ENCODE measurements at regions of chr15 and their contacts with region 1.

Region 1: DNA sequence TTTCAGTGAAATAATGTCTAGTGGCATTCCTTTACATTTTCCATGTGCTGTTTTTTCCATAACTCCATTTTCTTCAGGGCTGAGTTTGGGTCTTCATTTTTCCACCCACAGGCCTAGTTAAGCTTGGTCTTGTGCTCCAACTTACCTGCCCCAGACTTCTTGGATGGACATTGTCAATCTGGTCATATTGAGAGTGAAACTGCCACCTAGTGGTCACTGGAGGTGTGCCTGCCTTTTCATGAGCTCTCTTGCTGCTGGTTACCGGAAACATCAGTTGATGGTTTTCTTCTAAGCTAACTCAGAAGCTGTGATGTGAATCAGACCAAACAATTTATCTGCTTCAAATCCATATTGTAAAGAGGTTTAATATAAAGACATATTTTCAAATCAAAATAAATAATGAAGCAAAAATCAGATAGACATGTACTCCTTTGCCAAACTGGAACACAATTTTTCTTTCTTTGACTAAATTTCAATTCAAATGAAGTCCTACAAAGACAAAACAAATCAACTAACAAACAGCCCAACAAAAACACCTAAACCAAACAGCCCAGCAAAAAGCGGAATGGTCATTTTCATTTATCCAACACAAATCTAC is 135.1 kb upstream of the RASGRP1 start:
- DNase-seq: peak; percentile 83
- H3K4me3 Mint-ChIP-seq: peak overlapping the region; percentile 93
- H3K27ac Mint-ChIP-seq: peak overlapping the region; percentile 97
- H3K4me1 Mint-ChIP-seq: peaks cover 80% of the 10 kb centered on the region
- H3K27me3 Mint-ChIP-seq: no peaks in the 10 kb centered on the region

Region 2: GRCh38 chr15:38453971-38454695 is 245.6 kb before region 1 on chr15 and contains the start of gene FAM98B:
- CTCF ChIA-PET with region 1: interaction called, 67 read pairs
- POLR2A ChIA-PET with region 1: interaction called, 32 read pairs
- DNase-seq: peak; percentile 89
- H3K4me3 Mint-ChIP-seq: peak within 1 kb of the TSS; percentile 93
- H3K27ac Mint-ChIP-seq: peak within 1 kb of the TSS; percentile 84
- H3K4me1 Mint-ChIP-seq: peaks cover 35% of the 10 kb centered on the region
- H3K27me3 Mint-ChIP-seq: peaks cover 14% of the 10 kb centered on the region
- total RNA-seq, gene FAM98B: 33.2 to 35.3 TPM

Region 3: GRCh38 chr15:38490242-38490922 is 209.3 kb before region 1 on chr15:
- CTCF ChIA-PET with region 1: interaction called, 12 read pairs
- POLR2A ChIA-PET with region 1: interaction called, 16 read pairs
- DNase-seq: no peak
- H3K4me3 Mint-ChIP-seq: no peak overlapping the region
- H3K27ac Mint-ChIP-seq: peak overlapping the region; percentile 17
- H3K4me1 Mint-ChIP-seq: peaks cover 57% of the 10 kb centered on the region
- H3K27me3 Mint-ChIP-seq: no peaks in the 10 kb centered on the region

Region 4: DNA sequence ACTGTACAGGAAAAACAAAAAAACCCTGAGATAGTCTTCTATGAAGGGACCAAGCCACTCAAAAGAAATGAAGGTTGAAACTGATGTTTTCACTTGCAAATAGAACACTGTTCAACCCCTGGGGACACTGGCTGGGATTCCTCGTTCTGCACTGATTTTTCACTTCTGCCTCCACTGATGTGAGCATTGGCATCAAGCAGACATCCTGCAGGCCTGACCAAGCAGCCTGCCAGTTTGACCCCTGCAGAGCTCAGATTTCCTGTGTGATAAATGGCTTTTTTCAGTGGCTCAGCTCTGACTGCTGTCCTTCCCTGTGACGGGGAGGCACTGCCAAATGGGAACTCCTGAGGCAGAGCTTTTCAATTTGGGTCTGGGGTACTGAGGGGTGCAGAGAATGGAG is 185.1 kb before region 1 on chr15:
- CTCF ChIA-PET with region 1: interaction called, 15 read pairs
- POLR2A ChIA-PET with region 1: interaction called, 10 read pairs
- DNase-seq: no peak
- H3K4me3 Mint-ChIP-seq: no peak overlapping the region
- H3K27ac Mint-ChIP-seq: peak overlapping the region; percentile 21
- H3K4me1 Mint-ChIP-seq: peaks cover 56% of the 10 kb centered on the region
- H3K27me3 Mint-ChIP-seq: no peaks in the 10 kb centered on the region

Region 5: GRCh38 chr15:38631126-38632075 is 68.3 kb before region 1 on chr15:
- CTCF ChIA-PET with region 1: interaction called, 10 read pairs
- POLR2A ChIA-PET with region 1: interaction called, 4 read pairs
- DNase-seq: no peak
- H3K4me3 Mint-ChIP-seq: no peak overlapping the region
- H3K27ac Mint-ChIP-seq: peak overlapping the region; percentile 61
- H3K4me1 Mint-ChIP-seq: peaks cover 25% of the 10 kb centered on the region
- H3K27me3 Mint-ChIP-seq: no peaks in the 10 kb centered on the region

Region 6: GRCh38 chr15:38683382-38684242 is 16.1 kb before region 1 on chr15:
- CTCF ChIA-PET with region 1: interaction called, 304 read pairs
- POLR2A ChIA-PET with region 1: interaction called, 285 read pairs
- DNase-seq: peak; percentile 81
- H3K4me3 Mint-ChIP-seq: peak overlapping the region; percentile 54
- H3K27ac Mint-ChIP-seq: peak overlapping the region; percentile 99
- H3K4me1 Mint-ChIP-seq: peaks cover 75% of the 10 kb centered on the region
- H3K27me3 Mint-ChIP-seq: no peaks in the 10 kb centered on the region

Region 7: DNA sequence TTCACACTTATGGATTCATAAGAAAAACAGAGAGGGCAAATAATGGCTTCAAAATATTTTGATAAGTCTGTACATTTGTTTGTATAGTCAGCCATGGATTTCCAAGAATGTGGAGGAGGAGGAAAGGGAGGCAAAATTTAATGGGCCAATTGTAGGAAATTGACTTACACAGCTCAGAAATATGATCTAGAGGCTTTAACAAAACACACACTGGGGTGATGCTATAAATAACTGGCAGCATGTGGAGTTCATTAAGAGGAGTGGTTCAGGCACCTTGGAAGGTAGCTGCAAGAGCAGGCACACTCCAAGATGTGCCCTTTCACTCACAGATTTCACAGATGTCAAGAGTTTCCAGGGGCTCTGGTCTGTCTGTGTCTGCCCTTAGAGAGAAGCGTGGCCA is 58.3 kb after region 1 on chr15:
- CTCF ChIA-PET with region 1: no interaction called
- POLR2A ChIA-PET with region 1: no interaction called
- DNase-seq: no peak
- H3K4me3 Mint-ChIP-seq: no peak overlapping the region
- H3K27ac Mint-ChIP-seq: no peak overlapping the region
- H3K4me1 Mint-ChIP-seq: peaks cover 9% of the 10 kb centered on the region
- H3K27me3 Mint-ChIP-seq: peaks cover 15% of the 10 kb centered on the region